H1 (cell line): ENCODE measurements at regions of chr1 and their contacts with region 1.

Region 1: DNA sequence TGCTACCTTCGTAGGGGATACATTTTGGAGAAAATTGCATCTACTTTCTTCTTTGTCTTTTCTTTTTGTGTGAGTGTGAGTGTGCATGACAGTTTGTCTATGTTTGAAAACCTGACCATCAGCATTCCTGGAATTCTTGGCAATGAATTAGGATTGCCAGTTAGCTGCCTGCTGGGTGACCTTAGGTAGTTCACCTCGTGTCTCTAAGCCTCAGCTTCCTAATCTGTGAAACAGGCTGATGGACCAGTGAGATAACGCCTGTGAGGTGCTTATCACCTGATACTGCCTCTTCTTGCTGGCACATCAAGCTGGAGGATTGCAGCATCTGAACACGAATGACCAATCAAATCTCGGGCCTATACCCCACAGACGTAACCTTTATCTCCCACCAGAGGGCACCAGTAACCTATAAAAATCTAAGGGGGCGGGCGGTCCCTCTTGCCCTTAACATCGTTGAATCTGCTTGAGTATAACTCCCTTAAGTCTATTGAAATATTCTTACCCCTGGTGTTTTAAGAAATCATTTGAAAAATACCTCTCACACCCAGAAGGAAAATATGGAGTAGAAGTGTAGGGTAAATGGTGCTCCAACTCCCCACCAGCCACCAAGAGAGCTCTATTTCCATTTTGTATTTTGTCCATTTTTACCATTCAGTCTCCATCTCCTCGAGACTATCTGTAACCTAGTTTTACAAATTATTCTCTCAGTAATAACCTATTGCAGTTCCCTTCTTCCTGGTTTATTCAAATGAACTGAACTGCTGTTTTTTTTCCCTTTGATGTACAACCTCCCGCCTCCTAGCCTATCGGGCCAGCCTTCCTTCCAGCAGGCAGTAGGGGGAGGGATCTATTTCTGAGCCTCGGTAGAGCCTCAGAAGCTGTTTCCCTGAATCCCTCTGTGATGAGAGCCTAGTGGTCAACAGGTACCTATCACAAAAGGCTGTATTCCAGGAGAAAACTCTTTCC is 49.7 kb downstream of the MDM4 start:
- DNase-seq: peak in 1 of 2 experiments; percentile 63
- H3K4me3 ChIP-seq: peak overlapping the region in 1 of 4 experiments; percentile 34; a peak in 2 of 8 replicates
- H3K27ac ChIP-seq: peak overlapping the region; percentile 4; the same call in 1 of the 2 replicates
- H3K4me1 ChIP-seq: peaks cover 3 to 24% (median 13%) of the 10 kb centered on the region in 4 experiments; a peak in 6 of 7 replicates
- H3K27me3 ChIP-seq: no peaks in the 10 kb centered on the region; a peak in 1 of 7 replicates
- CTCF ChIP-seq: peak; percentile 36 to 83 (median 73)
- EP300 ChIP-seq: peak in 1 of 2 experiments; percentile 85; a peak in 1 of 3 replicates
- POLR2A ChIP-seq: no peak
- RAD21 ChIP-seq: peak; percentile 84 to 89

Region 2: GRCh38 chr1:204591594-204592051 is 25.7 kb after region 1 on chr1:
- CTCF ChIA-PET with region 1: interaction called, 21 read pairs
- POLR2A ChIA-PET with region 1: no interaction called
- DNase-seq: no peak
- H3K4me3 ChIP-seq: no peak overlapping the region
- H3K27ac ChIP-seq: no peak overlapping the region
- H3K4me1 ChIP-seq: peaks cover 3 to 7% (median 5%) of the 10 kb centered on the region in 4 experiments; a peak in 5 of 7 replicates
- H3K27me3 ChIP-seq: no peaks in the 10 kb centered on the region
- CTCF ChIP-seq: no peak
- EP300 ChIP-seq: no peak
- POLR2A ChIP-seq: no peak
- RAD21 ChIP-seq: no peak

Region 3: GRCh38 chr1:204615881-204616280 is 50.0 kb after region 1 on chr1:
- CTCF ChIA-PET with region 1: interaction called, 11 read pairs
- POLR2A ChIA-PET with region 1: interaction called, 4 read pairs
- DNase-seq: no peak
- H3K4me3 ChIP-seq: no peak overlapping the region
- H3K27ac ChIP-seq: no peak overlapping the region
- H3K4me1 ChIP-seq: peaks cover 0 to 4% (median 1%) of the 10 kb centered on the region in 4 experiments; a peak in 3 of 7 replicates
- H3K27me3 ChIP-seq: no peaks in the 10 kb centered on the region; a peak in 1 of 7 replicates
- CTCF ChIP-seq: no peak
- EP300 ChIP-seq: no peak
- POLR2A ChIP-seq: no peak
- RAD21 ChIP-seq: no peak

Region 4: GRCh38 chr1:204670152-204670927 is 104.4 kb after region 1 on chr1:
- CTCF ChIA-PET with region 1: interaction called, 10 read pairs
- POLR2A ChIA-PET with region 1: interaction called, 3 read pairs
- DNase-seq: no peak
- H3K4me3 ChIP-seq: no peak overlapping the region
- H3K27ac ChIP-seq: no peak overlapping the region
- H3K4me1 ChIP-seq: peaks cover 0 to 6% (median 3%) of the 10 kb centered on the region in 4 experiments; a peak in 3 of 7 replicates
- H3K27me3 ChIP-seq: no peaks in the 10 kb centered on the region; a peak in 2 of 7 replicates
- CTCF ChIP-seq: no peak
- EP300 ChIP-seq: no peak
- POLR2A ChIP-seq: no peak
- RAD21 ChIP-seq: no peak

Region 5: GRCh38 chr1:204714861-204715511 is 149.1 kb after region 1 on chr1:
- CTCF ChIA-PET with region 1: interaction called, 17 read pairs
- POLR2A ChIA-PET with region 1: interaction called, 3 read pairs
- DNase-seq: no peak
- H3K4me3 ChIP-seq: peak overlapping the region in 1 of 4 experiments; percentile 38; a peak in 2 of 8 replicates
- H3K27ac ChIP-seq: no peak overlapping the region
- H3K4me1 ChIP-seq: peaks cover 12 to 29% (median 20%) of the 10 kb centered on the region in 4 experiments
- H3K27me3 ChIP-seq: peaks cover 22 to 54% (median 46%) of the 10 kb centered on the region in 4 experiments
- CTCF ChIP-seq: peak; percentile 55 to 72 (median 65)
- EP300 ChIP-seq: no peak
- POLR2A ChIP-seq: no peak
- RAD21 ChIP-seq: peak; percentile 69 to 74

Region 6: DNA sequence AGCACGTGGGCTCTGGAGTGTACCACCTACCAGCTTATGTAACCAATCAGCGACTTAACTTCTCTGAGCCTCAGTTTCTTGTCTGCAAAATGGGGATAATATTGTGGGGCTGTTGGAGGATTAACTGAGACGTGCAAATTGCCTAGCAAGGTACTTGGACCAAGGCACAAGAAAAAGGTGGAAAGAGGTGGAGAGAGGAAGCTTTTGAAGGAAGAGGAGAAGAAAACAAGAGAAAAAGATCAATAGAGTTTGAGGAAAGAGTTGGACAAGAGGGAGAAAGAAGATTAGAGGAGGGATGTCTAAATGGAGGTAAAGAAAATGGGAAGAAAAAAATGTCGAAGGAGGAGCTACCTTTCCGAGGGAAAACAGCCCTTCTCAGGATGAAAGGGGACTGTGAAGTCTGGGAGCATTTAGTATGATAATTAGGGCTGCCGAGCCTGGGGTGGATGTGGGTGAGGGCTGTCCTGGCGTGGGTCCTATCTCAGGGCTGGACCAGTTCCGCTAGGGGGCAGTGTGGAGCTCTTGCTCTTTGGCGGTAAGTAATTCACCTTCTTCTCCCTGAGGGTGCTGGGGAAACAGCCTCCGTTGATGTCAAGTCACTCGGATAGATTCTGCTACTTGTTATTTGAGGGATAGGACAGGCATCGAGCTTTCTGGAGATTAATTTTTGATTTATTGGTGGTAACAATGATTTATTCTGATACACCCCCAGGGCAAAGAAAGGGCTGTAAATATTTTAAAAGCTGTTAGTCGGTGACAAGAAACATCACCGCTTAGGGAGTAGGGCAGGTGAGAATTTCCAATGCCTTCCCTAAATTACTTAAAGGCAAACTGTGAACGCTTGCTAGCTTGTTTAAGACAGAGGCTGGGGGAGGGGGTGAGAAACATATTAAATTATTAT is 225.8 kb after region 1 on chr1:
- CTCF ChIA-PET with region 1: interaction called, 18 read pairs
- POLR2A ChIA-PET with region 1: no interaction called
- DNase-seq: peak; percentile 79 to 95
- H3K4me3 ChIP-seq: no peak overlapping the region
- H3K27ac ChIP-seq: no peak overlapping the region
- H3K4me1 ChIP-seq: no peaks in the 10 kb centered on the region
- H3K27me3 ChIP-seq: no peaks in the 10 kb centered on the region; a peak in 2 of 7 replicates
- CTCF ChIP-seq: peak; percentile 79 to 95 (median 91)
- EP300 ChIP-seq: no peak
- POLR2A ChIP-seq: no peak
- RAD21 ChIP-seq: peak; percentile 47 to 62; a peak in 3 of 4 replicates